Caco-2 (cell line): ENCODE measurements at regions of chr20 and their contacts with region 1.

Region 1: GRCh38 chr20:55415567-55416142 is 589.7 kb downstream of the CBLN4 start:
- DNase-seq: peak in 1 of 2 experiments; percentile 24
- H3K4me3 ChIP-seq: no peak overlapping the region
- H3K4me3 Mint-ChIP-seq: no peak overlapping the region
- H3K27ac Mint-ChIP-seq: no peak overlapping the region
- H3K4me1 ChIP-seq: no peaks in the 10 kb centered on the region
- H3K4me1 Mint-ChIP-seq: no peaks in the 10 kb centered on the region
- H3K27me3 ChIP-seq: no peaks in the 10 kb centered on the region
- H3K27me3 Mint-ChIP-seq: peaks cover 4% of the 10 kb centered on the region
- CTCF ChIP-seq: peak; percentile 54 to 64

Region 2: GRCh38 chr20:54740511-54741348 is 674.9 kb before region 1 on chr20:
- CTCF ChIA-PET with region 1: no interaction called
- POLR2A ChIA-PET with region 1: no interaction called
- intact Hi-C with region 1: no loop called
- DNase-seq: no peak
- H3K4me3 ChIP-seq: no peak overlapping the region
- H3K4me3 Mint-ChIP-seq: no peak overlapping the region
- H3K27ac Mint-ChIP-seq: no peak overlapping the region
- H3K4me1 ChIP-seq: no peaks in the 10 kb centered on the region
- H3K4me1 Mint-ChIP-seq: no peaks in the 10 kb centered on the region
- H3K27me3 ChIP-seq: no peaks in the 10 kb centered on the region
- H3K27me3 Mint-ChIP-seq: peaks cover 17% of the 10 kb centered on the region
- CTCF ChIP-seq: no peak

Region 3: GRCh38 chr20:55667955-55668354 is 252.3 kb after region 1 on chr20:
- CTCF ChIA-PET with region 1: no interaction called
- POLR2A ChIA-PET with region 1: no interaction called
- intact Hi-C with region 1: loop called (anchors 10 kb)
- DNase-seq: no peak
- H3K4me3 ChIP-seq: no peak overlapping the region
- H3K4me3 Mint-ChIP-seq: no peak overlapping the region
- H3K27ac Mint-ChIP-seq: no peak overlapping the region
- H3K4me1 ChIP-seq: no peaks in the 10 kb centered on the region
- H3K4me1 Mint-ChIP-seq: no peaks in the 10 kb centered on the region
- H3K27me3 ChIP-seq: no peaks in the 10 kb centered on the region
- H3K27me3 Mint-ChIP-seq: peaks cover 8% of the 10 kb centered on the region
- CTCF ChIP-seq: no peak

Region 4: GRCh38 chr20:56171087-56172012 is 755.7 kb after region 1 on chr20:
- CTCF ChIA-PET with region 1: no interaction called
- POLR2A ChIA-PET with region 1: no interaction called
- intact Hi-C with region 1: loop called (anchors 5 kb)
- DNase-seq: peak in 1 of 2 experiments; percentile 24
- H3K4me3 ChIP-seq: no peak overlapping the region
- H3K4me3 Mint-ChIP-seq: no peak overlapping the region
- H3K27ac Mint-ChIP-seq: no peak overlapping the region
- H3K4me1 ChIP-seq: no peaks in the 10 kb centered on the region
- H3K4me1 Mint-ChIP-seq: no peaks in the 10 kb centered on the region
- H3K27me3 ChIP-seq: 0 out of 2 replicates have a peak, but pooled peaks cover 2% of the 10 kb centered on the region
- H3K27me3 Mint-ChIP-seq: peaks cover 10% of the 10 kb centered on the region
- CTCF ChIP-seq: peak; percentile 47 to 58